Gastrocnemius medialis (tissue), 4 donors: ENCODE measurements at regions of chr19 and their contacts with region 1.

Region 1: GRCh38 chr19:33143897-33144405 is 12.0 kb downstream of the WDR88 start:
- DNase-seq: peak; percentile 24 to 44
- ATAC-seq: peak; percentile 96 to 97
- H3K4me3 ChIP-seq: peak overlapping the region in 1 of 4 donors; percentile 31
- H3K27ac ChIP-seq: no peak overlapping the region
- H3K4me1 ChIP-seq: no peaks in the 10 kb centered on the region
- H3K27me3 ChIP-seq: no peaks in the 10 kb centered on the region
- CTCF ChIP-seq: peak; percentile 85 to 96 (median 89)
- POLR2A ChIP-seq: no peak

Region 2: GRCh38 chr19:33186431-33187182 is 42.7 kb after region 1 on chr19:
- in situ Hi-C with region 1: loop called in 3 of 4 experiments (anchors 5 kb)
- intact Hi-C with region 1: loop called (anchors 1 kb)
- DNase-seq: no peak
- ATAC-seq: no peak
- H3K4me3 ChIP-seq: no peak overlapping the region
- H3K27ac ChIP-seq: no peak overlapping the region
- H3K4me1 ChIP-seq: peaks cover 0 to 3% of the 10 kb centered on the region in 2 donors
- H3K27me3 ChIP-seq: no peaks in the 10 kb centered on the region
- CTCF ChIP-seq: no peak
- POLR2A ChIP-seq: no peak

Region 3: GRCh38 chr19:33235269-33235995 is 91.5 kb after region 1 on chr19:
- in situ Hi-C with region 1: loop called in 1 of 4 experiments (anchors 10 kb)
- intact Hi-C with region 1: no loop called
- DNase-seq: peak; percentile 31 to 63
- ATAC-seq: peak in 1 of 2 donors; percentile 77
- H3K4me3 ChIP-seq: no peak overlapping the region
- H3K27ac ChIP-seq: no peak overlapping the region
- H3K4me1 ChIP-seq: no peaks in the 10 kb centered on the region
- H3K27me3 ChIP-seq: no peaks in the 10 kb centered on the region
- CTCF ChIP-seq: peak; percentile 67 to 90 (median 86)
- POLR2A ChIP-seq: no peak